T-cell (primary cell): ENCODE measurements at regions of chr12 and their contacts with region 1.

Region 1: GRCh38 chr12:110280779-110281548 is at the start of gene ATP2A2:
- DNase-seq: peak; percentile 81 to 97 (median 89)
- ATAC-seq: peak; percentile 88 to 92 (median 88)
- H3K4me3 ChIP-seq: peak within 1 kb of the TSS; percentile 71 to 84
- H3K4me3 Mint-ChIP-seq: peak within 1 kb of the TSS; percentile 86 to 90 (median 89)
- H3K27ac ChIP-seq: peak within 1 kb of the TSS; percentile 64
- H3K27ac Mint-ChIP-seq: peak within 1 kb of the TSS; percentile 88 to 90
- H3K4me1 ChIP-seq: peaks cover 16 to 35% of the 10 kb centered on the region in 2 experiments
- H3K4me1 Mint-ChIP-seq: peaks cover 45 to 48% (median 46%) of the 10 kb centered on the region in 3 donors
- H3K27me3 ChIP-seq: no peaks in the 10 kb centered on the region
- H3K27me3 Mint-ChIP-seq: no peaks in the 10 kb centered on the region
- total RNA-seq, gene ATP2A2: 82.0 to 88.2 (median 82.8) TPM

Region 2: GRCh38 chr12:110304061-110304551 is 23.1 kb after region 1 on chr12:
- CTCF ChIA-PET with region 1: no interaction called
- POLR2A ChIA-PET with region 1: interaction called, 3 to 13 read pairs
- DNase-seq: no peak
- ATAC-seq: no peak
- H3K4me3 ChIP-seq: no peak overlapping the region
- H3K4me3 Mint-ChIP-seq: no peak overlapping the region
- H3K27ac ChIP-seq: no peak overlapping the region
- H3K27ac Mint-ChIP-seq: no peak overlapping the region
- H3K4me1 ChIP-seq: peaks cover 0 to 14% of the 10 kb centered on the region in 2 experiments
- H3K4me1 Mint-ChIP-seq: peaks cover 63 to 64% (median 64%) of the 10 kb centered on the region in 3 donors
- H3K27me3 ChIP-seq: no peaks in the 10 kb centered on the region
- H3K27me3 Mint-ChIP-seq: no peaks in the 10 kb centered on the region